HEK293 (cell line): ENCODE measurements at regions of chr12 and their contacts with region 1.

Region 1: DNA sequence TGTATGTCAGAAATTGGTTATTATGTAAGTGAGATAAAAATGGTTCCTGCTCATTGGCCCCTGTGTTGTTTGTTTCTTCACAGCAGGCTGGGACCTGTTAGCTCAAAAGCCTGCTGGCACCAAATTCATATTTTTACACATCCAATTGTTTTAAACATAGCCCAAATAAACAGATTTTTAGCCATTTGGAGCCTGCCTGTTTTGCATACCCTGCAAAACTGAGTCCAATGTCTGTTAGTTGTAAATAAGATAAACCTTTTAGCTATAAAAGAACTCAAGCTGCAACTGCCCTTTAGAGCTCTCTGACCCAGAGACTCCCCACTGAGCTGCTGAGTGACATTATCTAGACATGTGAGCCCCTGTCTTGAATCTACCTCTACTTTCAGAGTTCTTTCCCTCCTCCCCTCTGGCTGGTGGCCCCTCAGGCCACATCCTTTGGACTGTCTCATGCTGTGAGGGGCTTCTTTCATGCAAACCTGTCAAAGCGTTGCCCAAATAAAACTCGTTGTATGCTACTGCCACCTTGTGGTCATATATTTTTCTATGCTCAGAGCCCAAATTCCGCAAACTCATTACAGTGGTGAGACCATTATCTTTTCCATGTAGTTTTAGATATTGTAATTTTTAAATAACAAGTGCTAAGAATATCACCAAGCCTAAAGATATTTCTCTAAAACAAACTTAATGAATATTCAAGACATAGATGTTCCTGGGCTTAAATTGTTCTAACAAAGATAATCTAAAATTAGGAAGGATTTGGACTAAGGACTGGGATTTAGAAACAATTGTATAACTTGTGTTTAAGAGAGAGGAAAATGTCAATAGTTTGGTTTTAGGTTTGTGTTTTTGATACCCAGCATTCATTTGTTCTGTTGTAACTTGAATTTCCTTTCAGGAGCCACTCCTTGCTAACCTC is 337.9 kb downstream of the AACS start:
- H3K4me3 ChIP-seq: no peak overlapping the region
- H3K27ac ChIP-seq: no peak overlapping the region
- H3K4me1 ChIP-seq: no peaks in the 10 kb centered on the region
- CTCF ChIP-seq: peak; percentile 21; the same call in 1 of the 2 replicates

Region 2: GRCh38 chr12:125183187-125184067 is 219.7 kb before region 1 on chr12:
- CTCF ChIA-PET with region 1: interaction called, 39 read pairs
- POLR2A ChIA-PET with region 1: no interaction called
- H3K4me3 ChIP-seq: no peak overlapping the region
- H3K27ac ChIP-seq: no peak overlapping the region
- H3K4me1 ChIP-seq: peaks cover 9% of the 10 kb centered on the region
- CTCF ChIP-seq: peak; percentile 97

Region 3: DNA sequence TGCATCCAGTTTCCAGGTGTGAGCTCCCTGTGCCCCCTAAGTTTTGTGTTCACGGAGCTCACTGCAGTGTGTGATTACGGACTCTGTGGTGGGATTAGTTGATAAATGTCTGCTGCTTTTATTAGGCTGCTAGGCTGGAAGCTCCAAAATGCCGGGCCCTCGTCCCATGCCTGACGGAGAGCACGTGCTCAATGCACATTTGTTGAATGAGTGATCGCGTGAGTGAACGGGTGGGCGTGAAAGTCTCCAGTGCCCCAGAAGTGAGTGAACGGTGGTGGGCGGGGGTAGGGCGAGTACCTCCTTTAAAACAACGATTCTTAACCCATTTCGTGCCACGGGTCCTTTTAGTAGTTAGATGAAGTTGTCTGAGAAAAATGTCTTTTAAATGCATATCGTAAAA is 162.4 kb before region 1 on chr12:
- CTCF ChIA-PET with region 1: interaction called, 11 read pairs
- POLR2A ChIA-PET with region 1: no interaction called
- H3K4me3 ChIP-seq: no peak overlapping the region
- H3K27ac ChIP-seq: no peak overlapping the region
- H3K4me1 ChIP-seq: no peaks in the 10 kb centered on the region
- CTCF ChIP-seq: no peak

Region 4: GRCh38 chr12:125330645-125331341 is 72.3 kb before region 1 on chr12:
- CTCF ChIA-PET with region 1: interaction called, 44 read pairs
- POLR2A ChIA-PET with region 1: no interaction called
- H3K4me3 ChIP-seq: peak overlapping the region; percentile 9; the same call in 1 of the 2 replicates
- H3K27ac ChIP-seq: no peak overlapping the region
- H3K4me1 ChIP-seq: no peaks in the 10 kb centered on the region
- CTCF ChIP-seq: peak; percentile 77; the same call in 1 of the 2 replicates